Common myeloid progenitor, CD34-positive (primary cell): ENCODE measurements at regions of chr2 and their contacts with region 1.

Region 1: GRCh38 chr2:219073413-219074129 is 12.8 kb upstream of the IHH start:
- DNase-seq: peak; percentile 44 to 57 (median 50)
- H3K4me3 ChIP-seq: no peak overlapping the region
- H3K27ac ChIP-seq: no peak overlapping the region
- H3K4me1 ChIP-seq: no peaks in the 10 kb centered on the region
- H3K27me3 ChIP-seq: no peaks in the 10 kb centered on the region

Region 2: DNA sequence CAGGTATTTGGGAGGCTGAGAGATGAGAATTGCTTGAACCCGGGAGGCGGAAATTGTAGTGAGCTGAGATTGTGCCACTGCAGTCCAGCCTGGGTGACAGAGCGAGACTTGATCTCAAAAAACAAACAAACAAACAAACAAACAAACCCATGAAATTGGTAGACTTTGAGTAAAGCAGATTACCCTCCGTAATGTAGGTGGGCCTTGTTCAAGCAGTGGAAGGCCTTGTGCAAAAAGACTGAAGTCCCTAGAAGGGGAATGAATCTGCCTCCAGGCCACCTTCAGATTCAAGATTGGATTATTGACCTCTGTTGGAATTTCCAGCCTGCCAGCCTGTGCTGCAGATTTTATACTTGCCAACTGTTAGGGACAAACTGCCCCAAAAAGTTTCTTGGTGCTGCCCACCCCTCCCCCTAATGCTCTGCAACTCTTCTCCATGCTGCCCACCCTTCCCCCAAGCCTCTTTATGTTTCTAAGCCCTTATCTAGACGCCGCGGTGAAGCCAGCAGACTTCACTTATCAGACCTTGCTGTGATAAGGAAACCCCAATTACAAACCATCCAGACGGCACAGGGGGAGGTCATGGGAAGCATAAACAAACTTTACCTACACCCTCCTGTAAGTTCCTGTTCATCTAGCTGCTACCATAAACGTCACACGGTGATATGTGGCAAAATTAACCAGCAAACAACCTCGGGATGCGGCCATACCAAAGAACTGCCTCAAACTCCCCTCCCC is 274.6 kb before region 1 on chr2:
- CTCF ChIA-PET with region 1: no interaction called
- POLR2A ChIA-PET with region 1: no interaction called
- DNase-seq: peak in 1 of 3 donors; percentile 28
- H3K4me3 ChIP-seq: no peak overlapping the region
- H3K27ac ChIP-seq: no peak overlapping the region
- H3K4me1 ChIP-seq: no peaks in the 10 kb centered on the region
- H3K27me3 ChIP-seq: peaks cover 6 to 22% (median 11%) of the 10 kb centered on the region in 5 experiments

Region 3: DNA sequence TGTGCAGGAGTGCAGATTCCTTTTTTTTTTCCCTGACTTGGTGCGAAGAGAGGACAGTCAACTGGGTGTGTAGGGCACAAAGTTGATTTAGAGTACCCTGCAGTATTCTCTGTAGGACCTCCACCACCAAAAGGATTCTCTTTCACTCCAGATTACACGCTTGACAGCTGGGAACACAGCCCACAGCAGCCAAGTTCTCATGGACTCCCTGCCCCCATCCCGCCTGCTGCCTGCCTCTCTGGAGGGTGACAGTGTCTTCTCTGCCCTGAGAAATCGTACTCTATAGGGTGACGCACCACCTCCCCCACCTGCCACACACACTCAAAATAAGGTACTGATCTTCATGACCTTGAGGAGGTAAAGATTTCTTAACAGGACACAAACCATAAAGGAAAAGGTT is 13.8 kb after region 1 on chr2:
- CTCF ChIA-PET with region 1: interaction called, 32 read pairs
- POLR2A ChIA-PET with region 1: no interaction called
- DNase-seq: no peak
- H3K4me3 ChIP-seq: no peak overlapping the region
- H3K27ac ChIP-seq: no peak overlapping the region
- H3K4me1 ChIP-seq: peaks cover 0 to 29% (median 9%) of the 10 kb centered on the region in 4 experiments
- H3K27me3 ChIP-seq: no peaks in the 10 kb centered on the region

Region 4: GRCh38 chr2:219099329-219099728 is 25.8 kb after region 1 on chr2:
- CTCF ChIA-PET with region 1: interaction called, 32 read pairs
- POLR2A ChIA-PET with region 1: interaction called, 4 read pairs
- DNase-seq: no peak
- H3K4me3 ChIP-seq: no peak overlapping the region
- H3K27ac ChIP-seq: no peak overlapping the region
- H3K4me1 ChIP-seq: peaks cover 0 to 6% (median 4%) of the 10 kb centered on the region in 4 experiments
- H3K27me3 ChIP-seq: no peaks in the 10 kb centered on the region

Region 5: GRCh38 chr2:219104107-219105035 is 30.8 kb after region 1 on chr2:
- CTCF ChIA-PET with region 1: interaction called, 32 read pairs
- POLR2A ChIA-PET with region 1: interaction called, 4 read pairs
- DNase-seq: peak; percentile 48 to 61 (median 59)
- H3K4me3 ChIP-seq: no peak overlapping the region
- H3K27ac ChIP-seq: no peak overlapping the region
- H3K4me1 ChIP-seq: peaks cover 4 to 10% (median 4%) of the 10 kb centered on the region in 4 experiments
- H3K27me3 ChIP-seq: no peaks in the 10 kb centered on the region

Region 6: GRCh38 chr2:219111375-219112061 is 37.9 kb after region 1 on chr2:
- CTCF ChIA-PET with region 1: interaction called, 336 read pairs
- POLR2A ChIA-PET with region 1: no interaction called
- DNase-seq: no peak
- H3K4me3 ChIP-seq: no peak overlapping the region
- H3K27ac ChIP-seq: no peak overlapping the region
- H3K4me1 ChIP-seq: peaks cover 4 to 16% (median 6%) of the 10 kb centered on the region in 4 experiments
- H3K27me3 ChIP-seq: no peaks in the 10 kb centered on the region